ENCODE measurements at regions of chr15 and their contacts with region 1.

Region 1: GRCh38 chr15:66287461-66288057 is 5.8 kb upstream of the DIS3L start:
- DNase-seq: no peak
- H3K4me3 ChIP-seq: no peak overlapping the region
- H3K27ac ChIP-seq: no peak overlapping the region
- H3K4me1 ChIP-seq: peaks cover 0 to 18% (median 12%) of the 10 kb centered on the region in 4 donors
- H3K27me3 ChIP-seq: no peaks in the 10 kb centered on the region
- CTCF ChIP-seq: peak in 3 of 4 experiments; percentile 36 to 51 (median 40)
- EP300 ChIP-seq: no peak
- POLR2A ChIP-seq: no peak

Region 2: DNA sequence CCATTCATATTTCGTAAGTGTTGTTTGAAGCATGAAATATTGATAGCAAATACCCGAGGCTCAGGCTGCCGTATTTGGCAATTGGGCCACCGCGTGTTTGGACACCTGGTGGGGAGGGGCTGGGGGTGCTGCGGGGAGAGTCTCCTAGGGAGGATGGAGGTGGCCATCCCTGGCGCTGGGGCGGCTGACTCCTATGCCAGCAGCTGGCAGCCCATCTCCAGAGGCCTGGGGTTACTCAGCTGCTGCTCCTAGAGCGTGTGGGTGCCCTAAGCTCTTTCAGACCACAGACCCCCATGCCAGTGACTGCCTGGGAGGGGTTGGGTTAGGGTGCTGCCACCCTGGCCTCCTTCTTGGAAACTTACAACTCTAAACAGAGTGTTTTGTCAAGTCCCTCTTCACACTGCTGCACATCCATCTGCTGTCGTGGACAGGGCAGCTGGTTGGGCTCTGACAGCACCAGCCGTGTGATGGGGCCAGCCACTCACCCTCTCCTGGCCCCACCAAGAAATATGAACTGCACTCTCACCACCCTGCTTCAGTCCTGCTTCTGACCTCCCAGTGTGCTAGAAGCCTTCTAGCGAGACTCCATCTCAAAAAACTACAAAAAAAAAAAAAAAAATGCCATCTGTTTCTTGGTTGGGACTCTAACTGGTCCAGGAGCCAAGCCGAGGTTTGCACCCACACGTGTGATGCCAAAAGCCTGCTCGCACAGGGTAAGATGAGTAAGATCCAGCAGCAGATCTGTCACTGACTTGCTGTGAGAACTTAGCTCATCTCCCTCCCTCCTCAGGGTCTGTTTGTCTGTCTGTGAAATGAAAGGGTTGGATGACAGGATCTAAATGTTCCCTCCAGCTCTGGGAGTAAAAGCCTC is 190.2 kb before region 1 on chr15:
- intact Hi-C with region 1: no loop called
- DNase-seq: peak; percentile 58
- H3K4me3 ChIP-seq: no peak overlapping the region
- H3K27ac ChIP-seq: no peak overlapping the region
- H3K4me1 ChIP-seq: no peaks in the 10 kb centered on the region
- H3K27me3 ChIP-seq: peaks cover 0 to 8% (median 0%) of the 10 kb centered on the region in 3 donors
- CTCF ChIP-seq: no peak
- EP300 ChIP-seq: no peak
- POLR2A ChIP-seq: no peak

Region 3: DNA sequence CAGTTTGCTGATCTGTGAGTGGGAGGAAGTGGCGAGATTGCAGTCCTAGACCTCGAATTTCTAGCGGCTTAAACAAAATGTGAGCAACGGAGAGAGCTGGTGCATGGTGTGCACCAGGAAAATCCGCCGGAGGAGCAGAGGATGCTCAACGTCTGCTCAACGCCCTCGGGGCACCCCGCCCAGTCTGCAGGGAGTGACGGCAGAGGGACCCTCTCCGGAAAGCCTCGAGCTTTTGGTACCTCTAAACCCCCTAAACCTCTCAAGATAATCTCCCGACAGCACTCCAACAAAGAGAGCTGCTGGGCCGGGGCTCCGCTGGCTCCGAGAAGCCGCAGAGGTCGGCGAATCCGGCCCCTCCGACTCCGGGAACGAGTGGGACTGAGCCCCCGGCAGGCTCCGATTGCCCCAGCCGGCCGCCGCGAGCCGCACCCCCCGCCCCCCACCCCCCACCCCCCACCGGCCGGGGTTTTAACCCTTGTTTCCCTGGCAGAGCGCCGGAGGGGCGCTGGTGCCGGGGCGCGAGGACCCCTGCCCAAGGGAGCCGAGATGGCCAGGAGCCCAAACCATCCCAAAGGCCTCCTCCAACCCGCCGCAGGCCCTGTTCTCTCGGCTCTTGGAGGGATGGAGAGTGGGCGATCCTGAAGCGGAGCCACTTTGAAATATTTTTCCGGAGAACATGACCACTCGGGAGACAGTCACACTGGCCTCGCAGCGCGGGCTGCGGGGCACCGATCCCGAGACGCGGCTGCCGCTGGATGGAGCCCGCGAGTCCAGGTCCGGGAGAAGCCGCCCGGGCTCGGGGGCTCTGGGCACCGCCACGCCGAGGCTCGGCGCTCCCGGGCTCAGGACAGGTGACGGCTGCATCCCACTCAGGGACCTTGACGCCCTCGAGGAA is 35.5 kb before region 1 on chr15:
- intact Hi-C with region 1: loop called (anchors 5 kb)
- DNase-seq: peak; percentile 70
- H3K4me3 ChIP-seq: peak overlapping the region; percentile 13 to 59 (median 47)
- H3K27ac ChIP-seq: no peak overlapping the region
- H3K4me1 ChIP-seq: peaks cover 0 to 31% (median 29%) of the 10 kb centered on the region in 4 donors
- H3K27me3 ChIP-seq: peaks cover 24 to 76% (median 56%) of the 10 kb centered on the region in 3 donors
- CTCF ChIP-seq: peak in 3 of 4 experiments; percentile 27 to 59 (median 43)
- EP300 ChIP-seq: no peak
- POLR2A ChIP-seq: no peak